ENCODE measurements at regions of chr12 and their contacts with region 1.

Region 1: GRCh38 chr12:43835656-43836474 is at the start of gene TMEM117:
- DNase-seq: peak; percentile 75 to 80
- H3K4me3 ChIP-seq: peak within 1 kb of the TSS; percentile 59
- H3K4me3 Mint-ChIP-seq: peak within 1 kb of the TSS; percentile 81
- H3K27ac Mint-ChIP-seq: peak within 1 kb of the TSS; percentile 87
- H3K4me1 ChIP-seq: peaks cover 28% of the 10 kb centered on the region
- H3K4me1 Mint-ChIP-seq: peaks cover 31% of the 10 kb centered on the region
- H3K27me3 ChIP-seq: no peaks in the 10 kb centered on the region
- H3K27me3 Mint-ChIP-seq: no peaks in the 10 kb centered on the region
- CTCF ChIP-seq: no peak
- total RNA-seq, gene TMEM117: 28.0 and 34.1 TPM in 2 replicates

Region 2: GRCh38 chr12:43776498-43776897 is 59.4 kb before region 1 on chr12:
- CTCF ChIA-PET with region 1: no interaction called
- POLR2A ChIA-PET with region 1: no interaction called
- intact Hi-C with region 1: no loop called
- DNase-seq: peak in 1 of 2 experiments; percentile 59
- H3K4me3 ChIP-seq: no peak overlapping the region
- H3K4me3 Mint-ChIP-seq: no peak overlapping the region
- H3K27ac Mint-ChIP-seq: no peak overlapping the region
- H3K4me1 ChIP-seq: no peaks in the 10 kb centered on the region
- H3K4me1 Mint-ChIP-seq: no peaks in the 10 kb centered on the region
- H3K27me3 ChIP-seq: no peaks in the 10 kb centered on the region
- H3K27me3 Mint-ChIP-seq: no peaks in the 10 kb centered on the region
- CTCF ChIP-seq: peak; percentile 69 to 83

Region 3: DNA sequence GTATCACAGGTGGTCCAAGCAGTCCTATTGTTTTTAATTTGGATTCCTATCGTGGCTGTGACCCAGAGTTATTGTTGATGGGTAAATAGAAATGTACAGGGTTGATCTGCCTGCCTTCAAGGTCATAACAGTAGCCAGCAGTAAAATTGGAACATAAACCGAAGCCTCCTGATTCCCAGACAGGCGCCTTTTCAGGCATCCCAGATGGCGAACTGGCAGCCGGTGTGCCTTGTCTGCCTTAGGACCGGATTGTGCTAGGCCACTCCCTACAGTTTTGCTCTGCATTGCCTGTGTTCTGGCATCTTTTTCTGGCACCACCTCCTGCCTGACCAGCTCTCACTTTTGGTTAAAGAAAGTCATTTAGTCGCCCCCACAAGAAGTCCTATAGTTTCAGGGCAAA is 22.2 kb after region 1 on chr12:
- CTCF ChIA-PET with region 1: no interaction called
- POLR2A ChIA-PET with region 1: no interaction called
- intact Hi-C with region 1: loop called (anchors 1 kb)
- DNase-seq: no peak
- H3K4me3 ChIP-seq: no peak overlapping the region
- H3K4me3 Mint-ChIP-seq: no peak overlapping the region
- H3K27ac Mint-ChIP-seq: no peak overlapping the region
- H3K4me1 ChIP-seq: peaks cover 24% of the 10 kb centered on the region
- H3K4me1 Mint-ChIP-seq: peaks cover 20% of the 10 kb centered on the region
- H3K27me3 ChIP-seq: no peaks in the 10 kb centered on the region
- H3K27me3 Mint-ChIP-seq: no peaks in the 10 kb centered on the region
- CTCF ChIP-seq: no peak